ENCODE measurements at regions of chr22 and their contacts with region 1.

Region 1: DNA sequence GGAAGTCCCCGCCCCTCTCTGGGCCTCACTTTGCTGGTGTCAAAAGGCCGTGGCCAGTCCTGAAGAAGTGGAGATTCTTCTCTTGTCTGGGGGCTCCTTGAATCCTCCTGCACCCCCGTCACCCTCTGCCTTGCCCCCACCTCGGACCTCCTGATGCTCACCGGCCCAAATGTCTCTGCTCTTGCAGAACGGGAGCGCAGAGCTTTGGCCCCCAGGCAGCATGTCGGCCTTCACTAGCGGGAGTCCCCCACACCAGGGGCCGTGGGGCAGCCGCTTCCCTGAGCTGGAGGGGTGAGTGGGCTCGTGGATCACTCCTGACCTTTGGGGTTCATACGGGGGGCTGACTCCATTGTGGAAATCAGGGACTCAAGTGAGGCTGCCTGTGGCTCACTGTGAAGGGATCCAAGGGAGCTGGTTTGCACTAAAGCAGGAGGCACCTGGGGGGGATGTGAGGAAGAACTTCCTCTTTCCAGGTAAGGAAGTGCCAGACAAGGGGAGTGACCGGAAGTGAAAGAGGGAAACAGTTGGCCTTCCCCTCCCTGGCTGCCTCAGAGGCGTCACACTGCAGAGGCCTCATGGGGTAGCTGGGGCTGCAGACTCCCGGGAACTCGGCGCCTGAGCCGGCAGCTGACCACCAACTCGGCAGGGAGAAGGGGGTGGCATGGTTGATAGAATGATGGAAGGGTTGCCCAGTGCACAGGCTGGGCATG is 23.1 kb downstream of the CSF2RB start:
- DNase-seq: no peak
- H3K4me3 ChIP-seq: no peak overlapping the region
- H3K27ac ChIP-seq: no peak overlapping the region
- H3K4me1 ChIP-seq: no peaks in the 10 kb centered on the region
- H3K27me3 ChIP-seq: no peaks in the 10 kb centered on the region
- CTCF ChIP-seq: no peak
- EP300 ChIP-seq: no peak
- POLR2A ChIP-seq: no peak

Region 2: DNA sequence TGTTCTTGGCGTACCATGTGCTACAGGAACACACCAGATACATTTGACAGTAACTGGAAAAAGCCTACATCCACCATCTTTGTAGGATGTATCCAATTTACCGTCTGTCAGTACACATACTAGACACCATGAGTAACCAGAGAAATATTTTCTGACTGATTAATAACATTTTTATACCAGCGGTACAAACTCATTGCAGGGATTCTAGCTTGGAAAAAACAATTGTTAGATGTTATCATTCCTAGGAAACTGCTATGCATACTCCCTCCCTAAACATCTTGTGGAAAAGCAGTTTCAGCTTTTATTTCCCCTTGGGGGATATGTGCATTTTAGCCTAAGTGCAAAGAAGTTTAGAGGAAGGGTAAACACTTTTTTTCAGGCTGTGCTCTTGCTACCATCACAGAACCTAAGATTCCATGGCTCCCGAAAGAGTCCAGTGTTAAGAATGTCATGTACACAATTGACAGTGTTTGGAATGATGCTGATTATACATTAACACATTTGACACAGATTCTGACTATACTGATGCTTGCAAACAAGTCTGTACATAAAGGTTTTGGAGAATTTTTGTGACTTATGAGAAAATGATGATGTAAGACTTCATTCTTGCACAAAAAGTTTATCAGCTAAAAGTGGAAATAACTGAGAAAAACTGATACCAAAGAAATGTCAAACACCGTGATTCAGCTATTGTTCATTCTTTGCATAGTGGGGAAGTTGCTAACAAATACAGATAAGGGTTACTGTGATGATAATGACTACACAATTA is 52.0 kb before region 1 on chr22:
- in situ Hi-C with region 1: no loop called
- intact Hi-C with region 1: loop called (anchors 5 kb)
- DNase-seq: no peak
- H3K4me3 ChIP-seq: no peak overlapping the region
- H3K27ac ChIP-seq: no peak overlapping the region
- H3K4me1 ChIP-seq: no peaks in the 10 kb centered on the region
- H3K27me3 ChIP-seq: no peaks in the 10 kb centered on the region
- CTCF ChIP-seq: no peak
- EP300 ChIP-seq: no peak
- POLR2A ChIP-seq: no peak